ENCODE measurements at regions of chr16 and their contacts with region 1.

Region 1: GRCh38 chr16:46748775-46749705 is 896 bp upstream of the MYLK3 start:
- DNase-seq: no peak
- H3K4me3 ChIP-seq: no peak overlapping the region
- H3K4me3 Mint-ChIP-seq: peak overlapping the region; percentile 53
- H3K27ac Mint-ChIP-seq: peak overlapping the region; percentile 98
- H3K4me1 ChIP-seq: peaks cover 29% of the 10 kb centered on the region
- H3K4me1 Mint-ChIP-seq: peaks cover 18% of the 10 kb centered on the region
- H3K27me3 ChIP-seq: no peaks in the 10 kb centered on the region
- H3K27me3 Mint-ChIP-seq: no peaks in the 10 kb centered on the region
- CTCF ChIP-seq: no peak

Region 2: DNA sequence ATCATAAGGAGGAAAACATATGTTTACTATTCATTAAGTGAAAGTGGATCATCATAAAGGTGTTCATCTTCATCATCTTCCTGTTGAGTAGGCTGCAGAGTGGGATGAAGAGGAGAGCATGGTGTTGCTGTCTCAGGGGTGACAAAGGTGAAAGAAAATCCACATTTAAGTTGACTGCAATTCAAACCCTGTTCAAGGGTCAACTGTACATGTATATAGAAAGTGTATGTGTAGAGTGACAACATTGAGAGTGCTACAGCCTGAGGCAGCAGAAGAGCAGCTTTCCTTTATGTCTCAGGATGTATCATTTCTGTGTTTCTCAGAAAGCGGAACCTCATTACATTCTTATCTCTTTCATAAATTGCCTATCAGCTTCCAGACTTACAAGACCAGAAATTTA is 42.4 kb before region 1 on chr16:
- CTCF ChIA-PET with region 1: no interaction called
- POLR2A ChIA-PET with region 1: no interaction called
- intact Hi-C with region 1: loop called (anchors 1 kb)
- DNase-seq: no peak
- H3K4me3 ChIP-seq: no peak overlapping the region
- H3K4me3 Mint-ChIP-seq: peak overlapping the region; percentile 39
- H3K27ac Mint-ChIP-seq: peak overlapping the region; percentile 68
- H3K4me1 ChIP-seq: peaks cover 15% of the 10 kb centered on the region
- H3K4me1 Mint-ChIP-seq: peaks cover 11% of the 10 kb centered on the region
- H3K27me3 ChIP-seq: no peaks in the 10 kb centered on the region
- H3K27me3 Mint-ChIP-seq: no peaks in the 10 kb centered on the region
- CTCF ChIP-seq: no peak

Region 3: DNA sequence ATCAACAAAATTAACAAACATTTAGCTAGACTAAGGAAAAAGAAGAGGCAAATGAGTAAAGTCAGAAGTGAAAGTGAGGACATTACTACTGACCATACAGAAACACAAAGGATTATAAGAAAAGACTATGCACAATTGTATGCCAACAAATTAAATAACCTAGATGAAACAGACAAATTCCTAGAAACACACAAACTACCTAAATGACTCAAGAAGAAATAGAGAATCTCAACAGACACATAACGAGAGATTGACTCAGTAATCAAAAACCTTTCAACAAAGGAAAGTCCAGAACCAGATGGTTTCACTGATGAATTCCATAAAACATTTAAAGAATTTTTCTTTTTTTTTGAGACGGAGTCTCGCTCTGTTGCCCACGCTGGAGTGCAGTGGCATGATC is 34.8 kb after region 1 on chr16:
- CTCF ChIA-PET with region 1: no interaction called
- POLR2A ChIA-PET with region 1: no interaction called
- intact Hi-C with region 1: loop called (anchors 2 kb)
- DNase-seq: no peak
- H3K4me3 ChIP-seq: no peak overlapping the region
- H3K4me3 Mint-ChIP-seq: no peak overlapping the region
- H3K27ac Mint-ChIP-seq: no peak overlapping the region
- H3K4me1 ChIP-seq: peaks cover 20% of the 10 kb centered on the region
- H3K4me1 Mint-ChIP-seq: peaks cover 21% of the 10 kb centered on the region
- H3K27me3 ChIP-seq: no peaks in the 10 kb centered on the region
- H3K27me3 Mint-ChIP-seq: no peaks in the 10 kb centered on the region
- CTCF ChIP-seq: no peak

Region 4: DNA sequence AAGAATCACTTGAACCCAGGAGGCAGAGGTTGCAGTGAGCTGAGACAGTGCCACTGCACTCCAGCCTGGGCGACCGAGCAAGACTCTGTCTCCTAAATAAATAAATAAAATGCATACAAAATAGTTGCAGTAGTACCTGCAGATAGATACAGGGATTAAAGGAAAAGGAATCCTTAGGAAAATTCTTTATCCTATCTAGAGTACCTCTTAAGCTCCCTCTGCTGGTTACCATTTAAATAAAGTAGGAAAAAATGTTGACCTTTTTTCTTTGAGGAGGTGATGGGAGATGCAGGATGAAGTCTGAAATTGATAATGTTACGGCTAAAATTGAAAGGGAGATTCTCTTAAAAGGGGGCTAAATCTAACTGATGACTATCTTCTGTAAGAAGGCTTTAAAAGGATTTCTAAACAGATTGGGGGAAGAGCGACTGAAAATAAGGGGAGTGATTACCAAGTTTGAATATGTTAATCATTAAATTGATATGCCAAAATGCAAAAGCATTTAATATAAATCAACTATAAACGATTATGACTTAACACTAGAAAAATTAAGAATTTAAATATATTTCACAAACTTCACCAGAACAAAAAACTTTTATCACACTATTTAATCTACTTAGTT is 52.5 kb after region 1 on chr16:
- CTCF ChIA-PET with region 1: no interaction called
- POLR2A ChIA-PET with region 1: no interaction called
- intact Hi-C with region 1: loop called (anchors 5 kb)
- DNase-seq: peak in 1 of 2 experiments; percentile 24
- H3K4me3 ChIP-seq: no peak overlapping the region
- H3K4me3 Mint-ChIP-seq: no peak overlapping the region
- H3K27ac Mint-ChIP-seq: no peak overlapping the region
- H3K4me1 ChIP-seq: peaks cover 4% of the 10 kb centered on the region
- H3K4me1 Mint-ChIP-seq: peaks cover 6% of the 10 kb centered on the region
- H3K27me3 ChIP-seq: no peaks in the 10 kb centered on the region
- H3K27me3 Mint-ChIP-seq: no peaks in the 10 kb centered on the region
- CTCF ChIP-seq: peak; percentile 40 to 64

Region 5: GRCh38 chr16:46871587-46871986 is 122.5 kb after region 1 on chr16:
- CTCF ChIA-PET with region 1: no interaction called
- POLR2A ChIA-PET with region 1: no interaction called
- intact Hi-C with region 1: no loop called
- DNase-seq: no peak
- H3K4me3 ChIP-seq: no peak overlapping the region
- H3K4me3 Mint-ChIP-seq: no peak overlapping the region
- H3K27ac Mint-ChIP-seq: no peak overlapping the region
- H3K4me1 ChIP-seq: peaks cover 20% of the 10 kb centered on the region
- H3K4me1 Mint-ChIP-seq: peaks cover 19% of the 10 kb centered on the region
- H3K27me3 ChIP-seq: no peaks in the 10 kb centered on the region
- H3K27me3 Mint-ChIP-seq: no peaks in the 10 kb centered on the region
- CTCF ChIP-seq: no peak

Measured in Caco-2 (cell line).